ENCODE measurements at regions of chr10 and their contacts with region 1.

Region 1: GRCh38 chr10:72340510-72341261 is 14.0 kb downstream of the DNAJB12 start:
- DNase-seq: peak; percentile 64 to 77 (median 72)
- ATAC-seq: peak; percentile 16
- H3K4me3 ChIP-seq: no peak overlapping the region
- H3K27ac ChIP-seq: no peak overlapping the region
- H3K4me1 ChIP-seq: peaks cover 24% of the 10 kb centered on the region
- H3K27me3 ChIP-seq: no peaks in the 10 kb centered on the region
- CTCF ChIP-seq: peak; percentile 86 to 97 (median 92)
- POLR2A ChIP-seq: no peak

Region 2: GRCh38 chr10:72048450-72049124 is 292.1 kb before region 1 on chr10:
- intact Hi-C with region 1: loop called (anchors 10 kb)
- DNase-seq: peak; percentile 94 to 97 (median 94)
- ATAC-seq: peak; percentile 92
- H3K4me3 ChIP-seq: no peak overlapping the region
- H3K27ac ChIP-seq: no peak overlapping the region
- H3K4me1 ChIP-seq: no peaks in the 10 kb centered on the region
- H3K27me3 ChIP-seq: no peaks in the 10 kb centered on the region
- CTCF ChIP-seq: peak; percentile 97 to 99 (median 99)
- POLR2A ChIP-seq: no peak

Region 3: DNA sequence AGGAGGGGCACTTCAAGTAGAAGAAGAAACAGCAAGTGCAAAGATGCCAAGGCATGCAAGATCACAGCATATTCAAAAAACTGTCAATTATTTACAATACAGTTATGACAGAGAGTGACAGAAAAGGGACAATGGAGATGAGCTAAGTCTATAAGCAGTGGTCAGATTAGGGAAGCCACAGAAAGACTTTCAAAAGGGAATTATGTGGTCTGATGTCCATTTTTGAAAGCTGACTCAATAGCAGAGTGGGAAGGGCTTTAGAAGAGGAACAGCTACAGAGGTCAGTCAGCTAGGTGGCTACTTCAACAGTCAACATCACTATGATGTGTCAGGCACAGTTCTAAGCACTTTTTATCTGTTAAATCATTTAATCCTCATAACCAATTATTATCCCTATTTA is 207.2 kb before region 1 on chr10:
- intact Hi-C with region 1: loop called (anchors 10 kb)
- DNase-seq: peak in 1 of 4 donors; percentile 6
- ATAC-seq: no peak
- H3K4me3 ChIP-seq: no peak overlapping the region
- H3K27ac ChIP-seq: no peak overlapping the region
- H3K4me1 ChIP-seq: no peaks in the 10 kb centered on the region
- H3K27me3 ChIP-seq: no peaks in the 10 kb centered on the region
- CTCF ChIP-seq: no peak
- POLR2A ChIP-seq: no peak

Region 4: GRCh38 chr10:72649291-72649690 is 308.6 kb after region 1 on chr10:
- intact Hi-C with region 1: no loop called
- DNase-seq: no peak
- ATAC-seq: no peak
- H3K4me3 ChIP-seq: no peak overlapping the region
- H3K27ac ChIP-seq: no peak overlapping the region
- H3K4me1 ChIP-seq: no peaks in the 10 kb centered on the region
- H3K27me3 ChIP-seq: no peaks in the 10 kb centered on the region
- CTCF ChIP-seq: no peak
- POLR2A ChIP-seq: no peak

Region 5: DNA sequence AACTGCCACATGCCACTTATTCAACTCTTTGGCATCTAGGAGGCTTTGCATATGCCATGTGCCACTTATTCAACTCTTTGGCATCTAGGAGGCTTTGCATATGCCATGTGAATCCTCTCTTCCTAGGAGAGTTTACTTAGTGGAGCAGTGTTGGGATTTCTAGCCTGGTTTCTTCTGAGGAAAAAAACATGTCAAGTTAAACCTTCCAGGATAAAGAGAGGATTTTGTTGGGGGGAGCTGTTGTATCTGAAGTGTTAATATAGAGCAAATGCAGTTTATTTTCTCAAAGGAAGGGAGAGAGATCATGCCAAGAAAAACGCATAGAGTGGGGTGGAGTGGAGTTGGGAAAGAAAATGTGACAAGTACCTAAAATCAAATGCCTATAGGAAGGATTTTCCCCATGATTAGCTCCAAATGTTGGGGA is 442.7 kb after region 1 on chr10:
- intact Hi-C with region 1: no loop called
- DNase-seq: no peak
- ATAC-seq: no peak
- H3K4me3 ChIP-seq: no peak overlapping the region
- H3K27ac ChIP-seq: no peak overlapping the region
- H3K4me1 ChIP-seq: peaks cover 11% of the 10 kb centered on the region
- H3K27me3 ChIP-seq: no peaks in the 10 kb centered on the region
- CTCF ChIP-seq: no peak
- POLR2A ChIP-seq: no peak